ENCODE measurements at regions of chr3 and their contacts with region 1.

Region 1: GRCh38 chr3:10185804-10186762 is 21.4 kb downstream of the IRAK2 start:
- DNase-seq: no peak
- ATAC-seq: peak; percentile 64
- H3K4me3 Mint-ChIP-seq: peak overlapping the region; percentile 6
- H3K27ac Mint-ChIP-seq: peak overlapping the region; percentile 77
- H3K4me1 Mint-ChIP-seq: peaks cover 36% of the 10 kb centered on the region
- H3K27me3 Mint-ChIP-seq: no peaks in the 10 kb centered on the region

Region 2: GRCh38 chr3:10099041-10099440 is 87.0 kb before region 1 on chr3:
- POLR2A ChIA-PET with region 1: no interaction called
- DNase-seq: no peak
- ATAC-seq: no peak
- H3K4me3 Mint-ChIP-seq: no peak overlapping the region
- H3K27ac Mint-ChIP-seq: no peak overlapping the region
- H3K4me1 Mint-ChIP-seq: no peaks in the 10 kb centered on the region
- H3K27me3 Mint-ChIP-seq: no peaks in the 10 kb centered on the region

Region 3: DNA sequence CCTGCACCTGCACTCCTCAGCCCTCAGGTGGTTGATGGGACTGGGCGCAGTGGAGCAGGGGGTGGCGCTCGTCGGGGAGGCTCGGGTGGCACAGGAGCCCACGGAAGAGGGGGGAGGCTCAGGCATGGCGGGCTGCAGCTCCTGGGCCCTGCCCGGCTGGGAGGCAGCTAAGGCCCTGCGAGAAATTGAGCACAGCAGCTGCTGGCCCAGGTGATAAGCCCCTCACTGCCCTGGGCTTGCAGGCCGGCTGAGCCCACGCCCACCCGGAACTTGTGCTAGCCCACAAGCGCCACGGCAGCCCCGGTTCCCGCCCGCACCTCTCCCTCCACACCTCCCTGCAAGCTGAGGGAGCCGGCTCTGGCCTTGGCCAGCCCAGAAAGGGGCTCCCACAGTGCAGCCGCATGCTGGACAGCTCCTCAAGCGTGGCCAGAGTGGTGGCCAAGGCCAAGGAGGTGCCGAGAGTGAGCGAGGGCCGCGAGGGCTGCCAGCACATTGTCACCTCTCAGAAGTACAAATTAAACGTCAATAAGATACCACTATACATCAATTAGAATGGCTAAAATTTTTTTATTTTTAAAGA is 49.6 kb before region 1 on chr3:
- POLR2A ChIA-PET with region 1: interaction called, 10 read pairs
- DNase-seq: no peak
- ATAC-seq: no peak
- H3K4me3 Mint-ChIP-seq: no peak overlapping the region
- H3K27ac Mint-ChIP-seq: no peak overlapping the region
- H3K4me1 Mint-ChIP-seq: peaks cover 11% of the 10 kb centered on the region
- H3K27me3 Mint-ChIP-seq: no peaks in the 10 kb centered on the region